ENCODE measurements at regions of chr12 and their contacts with region 1.

Region 1: GRCh38 chr12:32312049-32312670 is 87.2 kb upstream of the FGD4 start:
- DNase-seq: no peak
- ATAC-seq: peak in 1 of 4 donors; percentile 22
- H3K4me3 ChIP-seq: no peak overlapping the region
- H3K27ac ChIP-seq: no peak overlapping the region
- H3K4me1 ChIP-seq: peaks cover 0 to 14% (median 5%) of the 10 kb centered on the region in 12 donors
- H3K27me3 ChIP-seq: no peaks in the 10 kb centered on the region
- CTCF ChIP-seq: peak; percentile 19 to 65 (median 52)
- POLR2A ChIP-seq: no peak

Region 2: DNA sequence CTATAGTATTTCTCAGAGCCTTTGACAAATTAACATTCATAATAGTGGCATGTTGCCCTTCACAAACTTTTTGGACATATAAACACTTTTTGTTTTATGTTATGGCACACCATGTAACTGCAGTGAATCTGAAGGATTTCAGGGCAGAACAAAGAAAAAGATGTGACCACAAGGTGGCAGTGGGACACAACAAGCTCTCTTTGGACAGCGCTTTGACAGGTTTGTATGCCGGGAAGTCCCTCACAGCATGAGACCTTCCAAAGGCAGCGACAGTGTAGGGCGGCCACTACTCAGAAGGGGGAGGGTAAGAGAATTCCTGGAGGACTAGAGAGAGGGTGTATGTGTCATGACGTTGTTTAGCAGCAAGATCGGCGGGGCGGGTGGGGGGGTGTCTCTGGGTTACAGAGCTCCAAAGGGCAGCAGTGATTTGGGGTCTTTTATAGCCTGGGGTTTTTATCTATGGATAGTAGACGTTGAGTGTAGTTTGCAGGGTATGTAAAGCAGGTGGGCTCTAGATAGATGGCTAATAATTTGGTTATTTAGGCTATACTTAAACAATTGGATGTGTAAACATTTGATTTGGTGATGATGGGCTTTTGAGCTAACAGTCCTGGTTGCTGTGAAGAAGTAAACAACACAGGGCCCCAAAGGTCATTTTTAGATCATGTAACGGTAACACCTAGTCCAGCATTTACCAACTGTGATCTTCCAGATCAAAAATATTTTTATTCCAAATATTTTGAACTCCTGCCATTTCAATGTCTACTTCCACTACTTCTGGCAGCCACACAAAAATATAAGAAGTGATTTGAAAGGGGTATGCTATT is 629.8 kb before region 1 on chr12:
- intact Hi-C with region 1: loop called in 6 of 10 experiments (anchors 5 to 10 kb)
- DNase-seq: peak in 4 of 5 donors; percentile 34 to 56 (median 43)
- ATAC-seq: peak; percentile 58 to 88 (median 78)
- H3K4me3 ChIP-seq: no peak overlapping the region
- H3K27ac ChIP-seq: no peak overlapping the region
- H3K4me1 ChIP-seq: peaks cover 0 to 11% (median 0%) of the 10 kb centered on the region in 12 donors
- H3K27me3 ChIP-seq: no peaks in the 10 kb centered on the region
- CTCF ChIP-seq: peak; percentile 48 to 73 (median 66)
- POLR2A ChIP-seq: no peak

Region 3: GRCh38 chr12:32230613-32230993 is 81.6 kb before region 1 on chr12:
- intact Hi-C with region 1: no loop called
- DNase-seq: no peak
- ATAC-seq: no peak
- H3K4me3 ChIP-seq: no peak overlapping the region
- H3K27ac ChIP-seq: no peak overlapping the region
- H3K4me1 ChIP-seq: peaks cover 0 to 2% (median 0%) of the 10 kb centered on the region in 12 donors
- H3K27me3 ChIP-seq: no peaks in the 10 kb centered on the region
- CTCF ChIP-seq: no peak
- POLR2A ChIP-seq: no peak

Region 4: DNA sequence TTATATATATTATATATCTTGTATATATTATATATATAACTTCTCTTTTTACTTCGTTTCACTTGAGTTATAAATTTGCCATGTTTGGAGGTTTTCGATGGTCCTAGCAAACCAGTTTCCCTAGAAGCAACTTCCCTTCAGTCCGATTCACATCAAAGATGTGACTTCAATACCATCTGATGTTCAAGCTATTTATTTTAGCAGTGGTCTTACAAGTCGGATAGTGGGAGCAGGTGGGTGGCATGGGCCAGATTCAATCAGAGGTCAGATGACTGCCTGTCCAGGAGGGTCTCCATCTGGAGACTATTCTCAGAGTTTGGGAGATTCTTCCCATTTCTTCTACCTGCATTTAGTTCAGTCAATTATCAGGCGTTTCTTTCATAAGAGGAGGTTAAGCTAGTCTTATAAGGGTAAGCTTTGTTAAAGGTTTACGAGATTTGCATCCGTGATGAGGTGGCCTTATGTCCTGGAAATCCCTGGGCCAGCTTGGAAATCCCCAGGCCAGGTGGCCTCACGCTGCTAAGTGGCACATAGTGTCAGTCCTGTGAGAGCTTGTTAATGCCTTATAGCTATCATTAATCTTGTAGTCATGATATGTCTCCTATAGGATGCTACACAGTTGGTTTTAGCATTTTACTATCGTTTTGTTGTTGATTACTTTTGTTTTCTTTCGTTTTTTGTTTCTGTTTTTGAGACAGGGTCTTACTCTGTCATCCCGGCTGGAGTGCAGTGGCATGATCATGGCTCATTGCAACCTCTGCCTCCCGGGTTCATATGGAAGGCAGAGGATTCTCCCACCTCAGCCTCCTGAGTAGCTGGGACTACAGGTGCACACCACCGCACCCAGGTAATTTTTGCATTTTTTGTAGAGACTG is 59.7 kb before region 1 on chr12:
- intact Hi-C with region 1: no loop called
- DNase-seq: no peak
- ATAC-seq: no peak
- H3K4me3 ChIP-seq: no peak overlapping the region
- H3K27ac ChIP-seq: no peak overlapping the region
- H3K4me1 ChIP-seq: no peaks in the 10 kb centered on the region
- H3K27me3 ChIP-seq: no peaks in the 10 kb centered on the region
- CTCF ChIP-seq: no peak
- POLR2A ChIP-seq: no peak

Measured in heart left ventricle (tissue), 16 donors.